Activated CD8-positive, alpha-beta T cell treated with anti-CD3 and anti-CD28 coated beads for 36 hours (primary cell): ENCODE measurements at regions of chr1 and their contacts with region 1.

Region 1: DNA sequence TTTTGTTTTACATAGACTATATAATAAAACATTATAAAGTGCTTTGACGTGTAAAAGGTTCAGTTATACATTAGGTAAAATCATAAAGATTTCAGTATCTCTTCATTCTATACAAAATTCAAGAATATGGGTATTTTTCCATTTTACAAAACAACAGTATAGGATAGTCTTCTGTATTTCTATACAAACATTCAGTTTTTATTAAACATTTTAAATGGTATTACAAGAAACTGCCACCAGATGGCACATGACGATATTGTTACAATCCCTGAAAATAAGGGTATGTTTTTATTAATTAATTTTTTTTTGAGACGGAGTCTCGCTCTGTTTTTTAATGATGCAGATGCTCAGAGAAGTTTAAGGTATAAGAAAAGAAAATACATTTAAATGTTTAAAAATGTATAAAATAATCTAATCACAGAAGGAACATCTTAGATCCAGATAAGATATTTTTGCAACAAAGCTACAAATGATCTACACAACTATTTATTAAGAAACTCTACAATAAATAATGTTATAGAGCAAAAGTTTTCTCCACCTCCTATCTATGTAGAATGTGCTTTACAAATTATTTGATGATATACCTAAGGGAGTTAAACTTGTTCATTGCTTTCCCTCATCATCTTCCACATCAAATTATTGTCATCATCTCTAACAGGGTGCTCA is 23.5 kb upstream of the RSBN1 start:
- DNase-seq: peak; percentile 32
- ATAC-seq: peak; percentile 58
- H3K4me3 Mint-ChIP-seq: no peak overlapping the region
- H3K27ac Mint-ChIP-seq: no peak overlapping the region
- H3K4me1 Mint-ChIP-seq: peaks cover 8% of the 10 kb centered on the region
- H3K27me3 Mint-ChIP-seq: no peaks in the 10 kb centered on the region
- CTCF ChIP-seq: peak; percentile 86

Region 2: DNA sequence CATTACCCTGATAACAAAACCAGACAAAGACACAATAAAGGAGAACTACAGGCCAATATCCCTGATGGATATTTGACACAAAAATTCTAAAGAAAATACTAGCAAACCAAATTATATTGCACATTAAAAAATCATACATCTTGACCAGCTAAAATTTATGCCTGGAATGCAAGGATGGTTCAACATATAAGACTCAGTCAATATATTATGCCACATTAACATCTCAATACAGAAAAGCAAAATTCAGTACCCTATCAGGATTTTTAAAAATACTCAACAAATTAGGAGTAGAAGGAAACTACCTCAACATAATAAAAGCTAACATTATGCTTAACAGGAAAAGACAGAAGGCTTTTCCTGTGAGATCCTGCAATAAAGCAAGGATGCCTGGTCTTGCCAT is 268.3 kb before region 1 on chr1:
- CTCF ChIA-PET with region 1: no interaction called
- POLR2A ChIA-PET with region 1: no interaction called
- intact Hi-C with region 1: no loop called
- DNase-seq: no peak
- ATAC-seq: no peak
- H3K4me3 Mint-ChIP-seq: no peak overlapping the region
- H3K27ac Mint-ChIP-seq: no peak overlapping the region
- H3K4me1 Mint-ChIP-seq: no peaks in the 10 kb centered on the region
- H3K27me3 Mint-ChIP-seq: no peaks in the 10 kb centered on the region
- CTCF ChIP-seq: no peak

Region 3: GRCh38 chr1:113859478-113860175 is 23.9 kb after region 1 on chr1:
- CTCF ChIA-PET with region 1: interaction called, 16 read pairs
- POLR2A ChIA-PET with region 1: no interaction called
- intact Hi-C with region 1: no loop called
- DNase-seq: no peak
- ATAC-seq: peak; percentile 62
- H3K4me3 Mint-ChIP-seq: no peak overlapping the region
- H3K27ac Mint-ChIP-seq: peak overlapping the region; percentile 74
- H3K4me1 Mint-ChIP-seq: peaks cover 42% of the 10 kb centered on the region
- H3K27me3 Mint-ChIP-seq: no peaks in the 10 kb centered on the region
- CTCF ChIP-seq: no peak

Region 4: DNA sequence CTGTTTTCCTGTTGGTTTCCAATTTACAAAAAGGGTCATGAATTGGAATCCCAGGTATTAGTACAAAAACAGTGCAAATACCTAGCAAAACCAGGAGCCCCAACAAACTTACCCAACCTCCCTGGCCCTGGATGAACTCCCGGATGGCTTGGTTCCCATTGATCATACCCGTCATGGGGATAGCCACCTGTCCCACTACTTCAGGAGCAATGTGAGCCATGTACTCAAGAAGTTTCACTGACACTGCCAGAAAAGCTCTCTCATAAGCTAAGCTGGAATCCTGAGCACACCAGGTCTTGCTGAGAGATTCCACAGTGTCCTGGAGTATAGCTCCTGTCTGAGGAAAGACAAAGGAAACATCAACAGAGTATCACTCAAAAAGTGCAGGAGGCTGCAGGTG is 45.9 kb after region 1 on chr1:
- CTCF ChIA-PET with region 1: interaction called, 17 read pairs
- POLR2A ChIA-PET with region 1: no interaction called
- intact Hi-C with region 1: no loop called
- DNase-seq: no peak
- ATAC-seq: no peak
- H3K4me3 Mint-ChIP-seq: no peak overlapping the region
- H3K27ac Mint-ChIP-seq: no peak overlapping the region
- H3K4me1 Mint-ChIP-seq: peaks cover 30% of the 10 kb centered on the region
- H3K27me3 Mint-ChIP-seq: no peaks in the 10 kb centered on the region
- CTCF ChIP-seq: no peak

Region 5: DNA sequence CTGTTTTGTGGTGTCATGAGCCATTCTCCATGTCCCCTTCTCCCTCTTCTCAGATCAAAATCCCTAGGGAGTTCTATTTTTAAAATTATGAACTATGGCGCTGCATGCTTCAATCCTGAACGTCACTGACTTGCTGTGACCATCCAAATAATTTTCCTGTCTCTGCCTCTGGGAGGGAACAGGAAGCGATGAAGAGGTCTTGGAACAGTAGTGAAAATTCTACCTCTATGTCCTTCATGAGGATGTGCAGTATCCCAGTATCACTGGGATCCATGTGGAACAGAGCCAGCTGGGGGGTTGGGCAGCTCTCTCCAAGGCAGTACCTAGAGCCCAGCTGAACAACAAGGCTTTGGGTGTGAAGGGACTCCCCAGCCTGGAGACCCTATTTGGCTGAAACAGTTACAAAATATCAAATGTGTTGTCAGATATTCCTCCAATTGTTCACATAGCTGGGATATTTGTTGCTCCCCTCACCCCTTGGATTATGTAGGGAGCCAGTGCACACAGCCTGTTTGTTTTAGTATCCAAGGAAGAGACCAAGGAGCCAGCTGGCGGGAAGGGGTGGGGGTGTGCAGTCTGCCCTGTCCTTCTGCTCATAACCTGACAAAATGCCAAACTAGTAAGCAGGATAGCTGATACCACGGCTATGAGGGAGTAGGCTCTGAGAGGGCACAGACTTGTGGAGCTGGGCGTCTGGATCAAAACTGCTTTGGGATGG is 77.0 kb after region 1 on chr1:
- CTCF ChIA-PET with region 1: interaction called, 15 read pairs
- POLR2A ChIA-PET with region 1: no interaction called
- intact Hi-C with region 1: no loop called
- DNase-seq: no peak
- ATAC-seq: no peak
- H3K4me3 Mint-ChIP-seq: no peak overlapping the region
- H3K27ac Mint-ChIP-seq: no peak overlapping the region
- H3K4me1 Mint-ChIP-seq: peaks cover 9% of the 10 kb centered on the region
- H3K27me3 Mint-ChIP-seq: no peaks in the 10 kb centered on the region
- CTCF ChIP-seq: no peak

Region 6: DNA sequence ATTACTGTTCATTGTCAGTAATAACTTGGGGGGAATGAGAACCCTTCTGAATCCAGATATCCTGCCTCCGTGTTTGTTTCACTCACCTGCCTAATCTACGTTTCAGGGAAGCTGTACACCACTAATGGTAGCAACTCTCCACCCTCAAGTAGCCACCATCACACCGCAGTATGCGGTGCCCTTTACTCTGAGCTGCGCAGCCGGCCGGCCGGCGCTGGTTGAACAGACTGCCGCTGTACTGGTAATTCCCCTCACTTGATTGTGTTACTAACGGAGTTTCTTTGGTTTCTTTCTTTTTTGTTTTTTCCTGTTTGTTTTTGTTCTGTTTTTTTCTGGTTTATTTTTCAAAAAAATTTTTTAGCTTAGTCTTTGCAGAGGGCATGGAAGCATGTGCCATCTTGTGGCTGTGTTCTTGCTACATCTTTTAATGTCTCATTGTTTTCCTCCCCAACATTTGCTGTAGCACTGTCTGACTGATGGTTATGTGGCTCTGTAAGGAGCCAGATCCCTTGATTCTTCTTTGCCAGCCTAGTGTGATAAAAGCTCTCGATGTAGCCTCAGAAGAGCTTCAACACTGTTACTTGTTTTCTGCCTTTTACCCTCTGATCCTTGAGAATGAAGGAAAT is 127.6 kb after region 1 on chr1:
- CTCF ChIA-PET with region 1: interaction called, 12 read pairs
- POLR2A ChIA-PET with region 1: no interaction called
- intact Hi-C with region 1: no loop called
- DNase-seq: no peak
- ATAC-seq: no peak
- H3K4me3 Mint-ChIP-seq: no peak overlapping the region
- H3K27ac Mint-ChIP-seq: peak overlapping the region; percentile 34
- H3K4me1 Mint-ChIP-seq: peaks cover 20% of the 10 kb centered on the region
- H3K27me3 Mint-ChIP-seq: no peaks in the 10 kb centered on the region
- CTCF ChIP-seq: peak; percentile 14

Region 7: GRCh38 chr1:114219172-114219868 is 383.5 kb after region 1 on chr1:
- CTCF ChIA-PET with region 1: no interaction called
- POLR2A ChIA-PET with region 1: no interaction called
- intact Hi-C with region 1: no loop called
- DNase-seq: no peak
- ATAC-seq: no peak
- H3K4me3 Mint-ChIP-seq: no peak overlapping the region
- H3K27ac Mint-ChIP-seq: no peak overlapping the region
- H3K4me1 Mint-ChIP-seq: peaks cover 4% of the 10 kb centered on the region
- H3K27me3 Mint-ChIP-seq: no peaks in the 10 kb centered on the region
- CTCF ChIP-seq: no peak